OCI-LY7 (cell line): ENCODE measurements at regions of chr1 and their contacts with region 1.

Region 1: GRCh38 chr1:43073490-43074230 is 98.4 kb downstream of the EBNA1BP2 start:
- DNase-seq: peak; percentile 77
- H3K4me3 ChIP-seq: no peak overlapping the region
- H3K27ac ChIP-seq: no peak overlapping the region
- H3K4me1 ChIP-seq: peaks cover 16% of the 10 kb centered on the region
- CTCF ChIP-seq: peak; percentile 94

Region 2: DNA sequence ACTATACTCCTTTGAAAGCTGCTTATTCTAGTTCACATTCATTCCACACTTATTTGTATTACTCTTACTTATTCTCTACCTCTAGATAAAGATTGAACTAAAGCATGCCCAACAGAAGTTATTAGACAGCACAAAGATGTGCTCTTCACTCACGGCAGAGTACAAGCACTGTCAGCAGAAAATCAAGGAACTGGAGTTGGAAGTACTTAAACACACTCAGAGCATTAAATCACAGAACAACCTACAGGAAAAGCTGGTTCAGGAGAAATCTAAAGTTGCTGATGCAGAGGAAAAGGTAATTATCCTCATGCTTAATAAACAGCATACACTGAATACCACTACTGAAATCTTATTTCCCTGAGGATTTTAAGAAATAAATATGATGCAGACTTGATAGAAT is 496.7 kb before region 1 on chr1:
- CTCF ChIA-PET with region 1: no interaction called
- POLR2A ChIA-PET with region 1: no interaction called
- intact Hi-C with region 1: loop called (anchors 2 kb)
- DNase-seq: no peak
- H3K4me3 ChIP-seq: no peak overlapping the region
- H3K27ac ChIP-seq: no peak overlapping the region
- H3K4me1 ChIP-seq: no peaks in the 10 kb centered on the region
- CTCF ChIP-seq: no peak

Region 3: DNA sequence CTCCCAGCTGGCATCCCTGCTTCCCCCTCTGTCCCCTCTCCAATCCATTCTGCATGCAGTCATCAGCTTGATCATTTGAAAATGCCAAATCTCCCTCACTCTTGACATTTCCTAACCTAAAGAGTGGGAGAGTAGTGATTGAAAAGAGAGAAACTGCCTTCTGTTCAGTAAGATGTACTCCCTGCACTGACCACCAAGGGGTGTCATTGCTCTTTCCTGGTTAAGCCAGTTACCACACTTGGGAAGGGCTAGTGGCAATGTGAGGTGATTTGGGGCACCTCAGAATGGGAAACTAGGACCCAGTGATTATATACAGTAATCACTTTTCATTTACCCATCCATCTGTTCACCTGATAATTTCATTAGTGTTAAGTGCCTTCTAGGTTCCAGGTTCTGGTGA is 295.8 kb before region 1 on chr1:
- CTCF ChIA-PET with region 1: interaction called, 3 read pairs
- POLR2A ChIA-PET with region 1: no interaction called
- intact Hi-C with region 1: loop called (anchors 1 kb)
- DNase-seq: peak; percentile 57
- H3K4me3 ChIP-seq: no peak overlapping the region
- H3K27ac ChIP-seq: no peak overlapping the region
- H3K4me1 ChIP-seq: no peaks in the 10 kb centered on the region
- CTCF ChIP-seq: peak; percentile 87

Region 4: GRCh38 chr1:42913426-42914091 is 160.1 kb before region 1 on chr1:
- CTCF ChIA-PET with region 1: interaction called, 49 read pairs
- POLR2A ChIA-PET with region 1: interaction called, 7 read pairs
- intact Hi-C with region 1: loop called (anchors 1 kb)
- DNase-seq: peak; percentile 82
- H3K4me3 ChIP-seq: no peak overlapping the region
- H3K27ac ChIP-seq: no peak overlapping the region
- H3K4me1 ChIP-seq: no peaks in the 10 kb centered on the region
- CTCF ChIP-seq: peak; percentile 80

Region 5: DNA sequence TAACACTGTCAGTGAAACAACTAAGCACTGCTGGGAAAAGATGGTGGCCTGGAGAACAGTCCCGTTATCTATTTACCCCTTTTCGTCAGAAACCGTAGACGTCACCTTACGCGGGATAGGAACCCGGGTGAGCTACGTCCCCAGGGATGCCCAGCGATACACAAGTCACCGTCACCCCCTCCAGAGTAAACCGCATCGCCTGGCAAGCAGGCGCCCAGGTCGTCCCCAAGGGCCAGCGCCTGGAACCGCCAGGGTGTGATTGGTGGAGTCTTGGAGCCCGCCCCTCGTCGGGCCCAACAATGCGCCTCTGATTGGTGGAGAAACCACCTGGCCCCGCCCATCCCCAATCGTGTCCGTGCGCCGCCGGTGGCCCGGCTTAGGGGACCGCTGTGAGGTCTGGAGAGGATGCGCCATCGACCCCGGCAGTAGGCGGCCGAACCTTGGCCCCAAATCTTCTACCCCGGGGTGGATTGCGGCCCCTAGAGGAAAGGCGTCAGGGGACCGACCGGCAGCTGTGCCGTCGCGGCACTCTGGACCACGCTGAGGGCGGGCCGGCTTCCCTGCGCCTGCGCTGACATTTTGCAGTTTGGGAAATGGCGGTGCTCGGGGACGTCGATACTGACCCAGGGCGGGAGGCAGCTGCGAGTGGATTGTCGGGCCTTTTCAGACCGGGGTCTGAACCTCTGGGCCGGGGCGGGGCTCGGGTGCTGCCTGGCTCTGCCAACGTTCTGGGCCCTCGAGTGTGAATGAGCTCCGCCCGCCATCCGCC is 149.4 kb before region 1 on chr1:
- CTCF ChIA-PET with region 1: interaction called, 21 read pairs
- POLR2A ChIA-PET with region 1: interaction called, 5 read pairs
- intact Hi-C with region 1: loop called (anchors 1 kb)
- DNase-seq: peak; percentile 89
- H3K4me3 ChIP-seq: peak overlapping the region; percentile 69
- H3K27ac ChIP-seq: peak overlapping the region; percentile 31
- H3K4me1 ChIP-seq: peaks cover 24% of the 10 kb centered on the region
- CTCF ChIP-seq: peak; percentile 45

Region 6: GRCh38 chr1:42931108-42931539 is 142.5 kb before region 1 on chr1:
- CTCF ChIA-PET with region 1: no interaction called
- POLR2A ChIA-PET with region 1: no interaction called
- intact Hi-C with region 1: loop called (anchors 1 kb)
- DNase-seq: peak; percentile 64
- H3K4me3 ChIP-seq: peak overlapping the region; percentile 41
- H3K27ac ChIP-seq: peak overlapping the region; percentile 91
- H3K4me1 ChIP-seq: peaks cover 55% of the 10 kb centered on the region
- CTCF ChIP-seq: peak; percentile 77